ENCODE measurements at regions of chr5 and their contacts with region 1.

Region 1: DNA sequence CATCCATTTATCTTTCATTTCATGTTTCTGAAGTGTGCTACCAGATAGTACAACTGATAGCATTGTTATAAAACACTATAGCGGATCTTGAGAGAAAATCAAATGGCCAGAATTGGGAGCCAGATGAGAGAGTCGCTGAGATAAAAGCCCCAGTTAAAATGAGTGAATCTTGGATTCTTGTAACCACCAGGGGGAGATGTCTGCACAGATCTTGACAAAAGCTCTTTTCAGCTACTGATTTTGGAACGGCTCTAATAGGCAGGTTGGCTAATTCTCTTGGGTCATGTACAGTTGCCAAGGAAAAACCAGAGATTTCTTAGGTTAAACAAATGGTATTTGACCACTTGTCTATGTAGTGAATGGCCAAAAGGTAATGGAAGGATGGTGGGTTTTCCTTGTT is 21.7 kb downstream of the F2RL2 start:
- DNase-seq: no peak

Region 2: DNA sequence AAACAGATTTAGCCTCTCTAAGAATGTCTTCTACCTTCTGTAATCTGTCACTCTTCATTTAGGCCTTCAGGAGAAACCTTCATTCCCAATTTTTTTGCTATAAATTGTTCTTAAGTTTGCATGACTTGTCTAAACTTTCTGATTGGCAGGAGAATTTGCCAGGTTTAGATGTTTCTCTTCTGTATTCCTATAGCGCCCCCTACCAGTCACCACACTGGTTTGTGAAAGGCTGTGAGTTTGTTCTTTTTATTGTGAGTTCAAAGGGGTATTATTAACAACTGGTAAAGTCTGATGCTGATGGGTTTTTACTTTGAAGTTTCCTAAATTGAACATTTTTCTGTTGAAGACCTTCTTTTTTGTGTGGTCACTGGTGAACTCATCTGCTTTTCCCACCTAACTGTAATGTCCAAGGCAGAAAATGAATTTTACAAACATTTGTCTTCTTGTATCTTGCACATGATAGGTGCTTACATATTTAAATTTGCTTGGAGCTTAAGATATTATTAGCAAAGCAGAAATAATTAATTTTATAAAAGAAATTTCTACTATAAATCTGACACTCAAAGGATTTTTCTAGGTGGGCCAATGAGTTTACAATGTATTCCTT is 40.1 kb after region 1 on chr5:
- intact Hi-C with region 1: loop called (anchors 2 kb)
- DNase-seq: no peak

Region 3: GRCh38 chr5:76771705-76772405 is 170.4 kb after region 1 on chr5:
- intact Hi-C with region 1: loop called (anchors 2 kb)
- DNase-seq: no peak

Region 4: GRCh38 chr5:77015938-77016569 is 414.6 kb after region 1 on chr5:
- intact Hi-C with region 1: loop called (anchors 5 kb)
- DNase-seq: no peak